Motor neuron (in vitro differentiated cells): ENCODE measurements at regions of chr15 and their contacts with region 1.

Region 1: GRCh38 chr15:51649659-51650521 is 27.3 kb upstream of the DMXL2 start:
- ATAC-seq: peak; percentile 77 to 96 (median 88)
- H3K4me3 ChIP-seq: no peak overlapping the region
- H3K27ac ChIP-seq: no peak overlapping the region
- H3K4me1 ChIP-seq: no peaks in the 10 kb centered on the region

Region 2: GRCh38 chr15:51750792-51751685 is 101.1 kb after region 1 on chr15 and contains the start of gene TMOD2:
- in situ Hi-C with region 1: loop called in 2 of 9 experiments (anchors 25 kb)
- ATAC-seq: peak; percentile 85 to 93 (median 89)
- H3K4me3 ChIP-seq: peak within 1 kb of the TSS; percentile 71 to 96 (median 84)
- H3K27ac ChIP-seq: peak within 1 kb of the TSS; percentile 8 to 33
- H3K4me1 ChIP-seq: peaks cover 0 to 6% of the 10 kb centered on the region in 2 donors
- total RNA-seq, gene TMOD2: 0.66 to 70.4 (median 28.9) TPM

Region 3: GRCh38 chr15:51759557-51760070 is 109.7 kb after region 1 on chr15:
- in situ Hi-C with region 1: loop called in 3 of 9 experiments (anchors 10 to 25 kb)
- ATAC-seq: peak in 3 of 8 experiments; percentile 29 to 56 (median 33)
- H3K4me3 ChIP-seq: no peak overlapping the region
- H3K27ac ChIP-seq: no peak overlapping the region
- H3K4me1 ChIP-seq: no peaks in the 10 kb centered on the region

Region 4: GRCh38 chr15:51771773-51772172 is 121.9 kb after region 1 on chr15:
- in situ Hi-C with region 1: loop called in 6 of 9 experiments (anchors 5 to 25 kb)
- ATAC-seq: peak in 3 of 8 experiments; percentile 17 to 94 (median 61)
- H3K4me3 ChIP-seq: no peak overlapping the region
- H3K27ac ChIP-seq: no peak overlapping the region
- H3K4me1 ChIP-seq: no peaks in the 10 kb centered on the region

Region 5: GRCh38 chr15:51776952-51777574 is 127.2 kb after region 1 on chr15:
- in situ Hi-C with region 1: loop called in 5 of 9 experiments (anchors 5 to 25 kb)
- ATAC-seq: peak; percentile 58 to 97 (median 79)
- H3K4me3 ChIP-seq: no peak overlapping the region
- H3K27ac ChIP-seq: no peak overlapping the region
- H3K4me1 ChIP-seq: no peaks in the 10 kb centered on the region

Region 6: GRCh38 chr15:51842852-51843737 is 193.2 kb after region 1 on chr15:
- in situ Hi-C with region 1: no loop called
- ATAC-seq: peak in 4 of 8 experiments; percentile 22 to 39 (median 25)
- H3K4me3 ChIP-seq: no peak overlapping the region
- H3K27ac ChIP-seq: no peak overlapping the region
- H3K4me1 ChIP-seq: peaks cover 15 to 21% of the 10 kb centered on the region in 2 donors

Region 7: DNA sequence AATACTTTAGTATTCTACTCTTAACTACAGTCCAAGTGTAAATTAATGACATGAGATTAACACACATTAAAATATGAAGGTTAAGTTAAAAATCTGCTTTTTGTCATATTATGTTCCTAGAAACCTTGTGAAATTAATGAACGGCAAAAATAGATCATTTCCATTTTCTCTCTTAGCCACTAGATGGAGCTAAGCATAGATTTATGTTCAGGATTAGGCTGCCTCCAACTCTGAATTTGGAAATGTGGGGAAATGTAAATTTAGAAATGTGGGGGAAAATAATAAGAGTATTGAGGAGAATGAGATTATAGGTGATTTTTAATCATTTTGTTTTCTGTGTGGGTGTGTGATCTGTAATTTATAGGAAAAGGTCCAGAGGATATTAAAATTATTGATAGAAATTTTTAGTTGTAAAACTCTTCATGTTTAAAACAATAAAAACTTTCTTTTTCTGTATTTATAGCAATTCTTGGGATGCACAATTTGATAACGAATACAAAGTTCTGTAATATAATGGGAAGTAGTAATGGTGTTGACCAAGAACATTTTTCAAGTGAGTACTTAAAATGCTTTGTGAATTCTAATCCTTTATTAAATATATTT is 238.8 kb after region 1 on chr15:
- in situ Hi-C with region 1: loop called in 1 of 9 experiments (anchors 25 kb)
- ATAC-seq: peak in 3 of 8 experiments; percentile 22 to 44 (median 34)
- H3K4me3 ChIP-seq: no peak overlapping the region
- H3K27ac ChIP-seq: no peak overlapping the region
- H3K4me1 ChIP-seq: peaks cover 0 to 3% of the 10 kb centered on the region in 2 donors

Region 8: GRCh38 chr15:51982013-51982769 is 332.3 kb after region 1 on chr15:
- in situ Hi-C with region 1: no loop called
- ATAC-seq: peak; percentile 62 to 94 (median 82)
- H3K4me3 ChIP-seq: no peak overlapping the region
- H3K27ac ChIP-seq: no peak overlapping the region
- H3K4me1 ChIP-seq: peaks cover 0 to 3% of the 10 kb centered on the region in 2 donors